Common myeloid progenitor, CD34-positive (primary cell): ENCODE measurements at regions of chr1 and their contacts with region 1.

Region 1: DNA sequence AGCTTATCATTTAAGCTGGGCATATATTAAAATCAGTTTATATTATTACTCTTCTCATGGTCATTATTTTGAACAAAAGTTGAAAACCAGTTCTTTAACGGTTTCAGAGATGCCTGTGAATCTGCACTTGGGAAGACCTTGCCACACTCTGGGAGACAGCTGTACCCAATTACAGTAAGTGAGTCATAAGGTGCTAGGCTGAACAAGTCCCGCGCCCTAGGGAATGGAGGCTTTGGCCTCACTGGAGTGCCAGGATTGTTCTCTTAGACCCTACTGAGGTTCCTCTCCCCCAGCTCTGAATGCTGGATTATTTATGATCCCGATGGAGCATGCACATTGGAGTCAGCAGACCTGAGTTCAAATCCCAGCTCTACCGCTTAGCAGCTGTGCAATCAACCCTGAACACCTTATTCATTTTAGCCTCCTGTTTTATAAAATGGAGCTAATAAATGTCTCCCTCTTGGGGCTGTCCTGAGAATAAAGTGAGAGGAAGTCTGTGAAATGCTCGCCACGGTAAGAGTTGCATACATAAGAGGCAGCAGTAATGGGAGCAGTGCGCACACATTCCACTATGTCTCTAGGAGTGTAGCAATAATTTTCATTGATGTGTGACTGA is 266.2 kb downstream of the FOXD2 start:
- DNase-seq: peak in 2 of 3 donors; percentile 42 to 43
- H3K4me3 ChIP-seq: no peak overlapping the region
- H3K27ac ChIP-seq: no peak overlapping the region
- H3K4me1 ChIP-seq: peaks cover 0 to 9% (median 7%) of the 10 kb centered on the region in 4 experiments
- H3K27me3 ChIP-seq: peaks cover 0 to 47% (median 9%) of the 10 kb centered on the region in 5 experiments

Region 2: DNA sequence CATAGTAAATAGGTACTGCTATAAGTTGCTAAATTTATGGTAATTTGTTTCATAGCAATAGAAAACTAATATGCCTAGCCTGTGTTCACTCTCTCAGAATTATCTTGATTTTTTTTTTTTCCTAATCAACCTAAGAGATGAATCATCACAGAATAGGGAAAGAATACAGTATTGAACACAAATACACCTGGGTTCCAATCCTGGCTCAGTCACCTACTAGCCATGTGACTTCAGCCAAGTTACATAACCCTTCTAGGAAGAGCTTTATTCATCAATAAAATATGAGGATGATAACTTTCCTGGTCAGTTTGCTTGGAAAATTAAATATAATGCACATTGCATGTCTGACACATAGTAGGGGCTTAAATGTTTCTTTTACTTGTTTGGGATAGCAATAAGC is 13.3 kb after region 1 on chr1:
- CTCF ChIA-PET with region 1: interaction called, 10 read pairs
- POLR2A ChIA-PET with region 1: no interaction called
- DNase-seq: no peak
- H3K4me3 ChIP-seq: no peak overlapping the region
- H3K27ac ChIP-seq: no peak overlapping the region
- H3K4me1 ChIP-seq: peaks cover 0 to 4% (median 0%) of the 10 kb centered on the region in 4 experiments
- H3K27me3 ChIP-seq: peaks cover 6 to 48% (median 43%) of the 10 kb centered on the region in 5 experiments